ENCODE measurements at regions of chr14 and their contacts with region 1.

Region 1: DNA sequence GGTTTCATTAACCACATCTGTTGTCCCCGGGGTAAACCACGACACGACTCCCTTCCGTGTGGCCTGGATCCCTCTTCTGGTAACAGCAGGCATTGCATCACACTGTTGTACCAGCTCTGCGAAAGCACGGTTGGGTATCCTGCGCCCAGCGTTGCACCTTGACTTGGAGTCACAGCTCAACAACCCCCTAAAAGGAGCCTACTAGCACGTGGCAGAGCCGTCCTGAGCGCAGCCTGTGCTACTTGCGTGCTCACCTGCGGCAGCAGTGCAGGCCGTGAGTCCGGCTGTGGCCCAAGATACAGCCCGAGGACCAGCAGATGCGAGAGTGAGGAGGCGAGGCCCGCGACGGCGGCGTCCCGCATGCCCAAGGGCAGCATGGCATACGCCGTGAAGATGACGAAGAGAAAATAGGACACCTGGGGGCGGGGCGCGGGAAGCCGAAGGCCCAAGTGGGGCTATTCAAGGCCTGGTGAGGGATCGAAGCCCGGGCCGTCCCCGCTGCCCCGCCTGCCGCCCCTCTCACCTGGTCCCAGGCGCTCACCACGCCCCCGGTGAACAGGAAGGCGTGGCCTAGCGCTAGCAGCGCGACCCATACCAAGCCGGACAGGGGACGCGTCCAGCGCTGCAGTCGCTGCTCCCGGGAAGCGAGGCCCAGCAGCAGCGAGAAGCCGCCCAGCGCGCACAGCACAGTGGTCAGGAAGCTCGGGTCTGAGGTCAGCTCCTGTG is 2.4 kb downstream of the ADCY4 start:
- DNase-seq: peak; percentile 72
- H3K4me3 Mint-ChIP-seq: no peak overlapping the region
- H3K27ac Mint-ChIP-seq: no peak overlapping the region
- H3K4me1 Mint-ChIP-seq: peaks cover 7% of the 10 kb centered on the region
- H3K27me3 Mint-ChIP-seq: peaks cover 11% of the 10 kb centered on the region
- CTCF ChIP-seq: peak; percentile 60

Region 2: DNA sequence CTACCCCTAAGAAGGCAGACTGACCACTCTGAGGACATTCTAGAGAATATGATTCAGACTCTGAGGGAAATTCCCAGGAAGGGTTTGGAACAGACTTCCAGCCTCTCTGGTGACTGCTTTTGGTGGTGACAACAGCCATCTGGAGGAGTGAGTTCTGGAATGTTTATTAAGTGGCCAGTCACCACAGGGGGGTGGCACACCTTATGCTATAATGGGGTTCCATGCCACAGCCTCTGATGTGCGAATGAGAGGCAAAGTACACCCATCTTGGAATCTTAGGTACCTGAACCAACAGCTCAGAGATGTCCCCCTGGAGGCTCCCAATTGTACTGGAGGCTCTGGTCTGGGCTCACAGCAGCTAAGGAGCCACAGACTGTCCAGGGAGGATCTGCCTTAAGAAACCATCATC is 80.5 kb before region 1 on chr14:
- CTCF ChIA-PET with region 1: interaction called, 13 read pairs
- POLR2A ChIA-PET with region 1: no interaction called
- intact Hi-C with region 1: no loop called
- DNase-seq: no peak
- H3K4me3 Mint-ChIP-seq: no peak overlapping the region
- H3K27ac Mint-ChIP-seq: no peak overlapping the region
- H3K4me1 Mint-ChIP-seq: peaks cover 7% of the 10 kb centered on the region
- H3K27me3 Mint-ChIP-seq: no peaks in the 10 kb centered on the region
- CTCF ChIP-seq: no peak

Region 3: GRCh38 chr14:24343795-24344660 is 11.6 kb after region 1 on chr14:
- CTCF ChIA-PET with region 1: interaction called, 108 read pairs
- POLR2A ChIA-PET with region 1: no interaction called
- intact Hi-C with region 1: no loop called
- DNase-seq: no peak
- H3K4me3 Mint-ChIP-seq: no peak overlapping the region
- H3K27ac Mint-ChIP-seq: no peak overlapping the region
- H3K4me1 Mint-ChIP-seq: no peaks in the 10 kb centered on the region
- H3K27me3 Mint-ChIP-seq: peaks cover 13% of the 10 kb centered on the region
- CTCF ChIP-seq: no peak

Region 4: DNA sequence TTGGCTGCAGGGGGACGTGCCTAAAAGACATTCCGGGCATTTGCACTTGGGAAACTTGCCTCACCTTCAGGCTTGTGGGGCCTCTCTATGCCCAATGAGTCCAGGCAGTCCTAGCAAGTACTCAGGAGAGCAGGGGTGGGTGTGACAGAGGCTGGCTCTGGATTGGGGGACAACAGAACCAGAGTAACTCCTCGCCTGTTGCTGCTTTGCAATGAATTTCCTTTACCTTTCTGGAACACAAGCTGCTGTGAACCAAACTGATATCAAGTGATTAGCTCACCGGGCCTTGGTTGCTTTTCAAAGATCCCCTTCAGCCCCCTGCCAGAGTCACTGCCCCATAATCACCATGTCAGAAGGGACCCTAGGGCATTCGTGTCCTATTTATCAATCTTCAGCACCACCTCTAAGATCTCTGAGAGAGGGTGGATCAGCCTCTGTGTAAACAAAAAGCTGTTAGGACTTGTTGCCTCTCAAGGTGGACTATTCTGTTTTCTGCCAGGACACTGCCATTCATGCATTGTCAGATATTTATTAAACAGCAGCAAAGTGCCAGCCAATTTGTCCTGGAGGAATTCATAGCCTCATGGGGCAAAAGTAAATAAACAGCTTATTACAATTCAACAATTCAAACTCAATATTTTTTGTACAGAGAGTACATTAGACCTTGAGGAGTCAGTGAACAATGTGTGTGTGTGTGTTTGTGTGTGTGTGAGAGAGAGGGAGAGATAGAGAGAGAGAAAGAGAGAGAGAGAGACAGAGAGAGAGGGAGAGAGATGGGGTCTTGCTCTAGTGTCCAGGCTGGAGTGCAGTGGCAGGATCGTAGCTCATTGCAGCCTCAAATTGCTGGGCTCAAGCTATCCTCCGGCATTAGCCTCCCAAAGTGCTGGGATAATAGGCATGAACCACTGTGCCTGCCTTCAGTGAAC is 46.8 kb after region 1 on chr14:
- CTCF ChIA-PET with region 1: interaction called, 21 read pairs
- POLR2A ChIA-PET with region 1: no interaction called
- intact Hi-C with region 1: no loop called
- DNase-seq: no peak
- H3K4me3 Mint-ChIP-seq: no peak overlapping the region
- H3K27ac Mint-ChIP-seq: no peak overlapping the region
- H3K4me1 Mint-ChIP-seq: no peaks in the 10 kb centered on the region
- H3K27me3 Mint-ChIP-seq: peaks cover 8% of the 10 kb centered on the region
- CTCF ChIP-seq: no peak

Region 5: DNA sequence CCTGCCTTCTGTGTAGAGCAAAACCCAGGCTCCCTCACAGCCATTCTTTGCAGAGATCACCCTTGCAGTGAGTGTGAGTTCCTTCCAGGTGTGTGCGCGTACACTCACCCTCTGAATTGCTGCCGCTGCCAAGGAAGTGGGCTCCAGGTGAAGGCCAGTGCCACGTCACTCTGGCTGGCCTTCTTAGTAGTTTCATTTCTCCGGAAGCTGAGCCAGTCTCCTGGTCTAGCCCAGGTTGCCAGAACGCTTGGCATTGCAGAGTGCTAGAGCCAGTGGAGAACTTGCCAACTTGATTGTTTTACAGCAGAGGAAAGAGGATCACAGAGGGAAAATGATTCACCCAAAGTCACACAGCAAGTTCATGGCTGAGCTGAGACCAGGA is 86.1 kb after region 1 on chr14:
- CTCF ChIA-PET with region 1: interaction called, 109 read pairs
- POLR2A ChIA-PET with region 1: no interaction called
- intact Hi-C with region 1: no loop called
- DNase-seq: peak; percentile 74
- H3K4me3 Mint-ChIP-seq: no peak overlapping the region
- H3K27ac Mint-ChIP-seq: peak overlapping the region; percentile 42
- H3K4me1 Mint-ChIP-seq: peaks cover 11% of the 10 kb centered on the region
- H3K27me3 Mint-ChIP-seq: no peaks in the 10 kb centered on the region
- CTCF ChIP-seq: no peak

Region 6: GRCh38 chr14:24678801-24679247 is 346.4 kb after region 1 on chr14:
- CTCF ChIA-PET with region 1: interaction called, 4 read pairs
- POLR2A ChIA-PET with region 1: no interaction called
- intact Hi-C with region 1: loop called (anchors 1 kb)
- DNase-seq: peak; percentile 82
- H3K4me3 Mint-ChIP-seq: peak overlapping the region; percentile 71
- H3K27ac Mint-ChIP-seq: peak overlapping the region; percentile 40
- H3K4me1 Mint-ChIP-seq: peaks cover 5% of the 10 kb centered on the region
- H3K27me3 Mint-ChIP-seq: peaks cover 75% of the 10 kb centered on the region
- CTCF ChIP-seq: peak; percentile 96

Measured in MCF 10A (cell line).